ENCODE measurements at regions of chr5 and their contacts with region 1.

Region 1: DNA sequence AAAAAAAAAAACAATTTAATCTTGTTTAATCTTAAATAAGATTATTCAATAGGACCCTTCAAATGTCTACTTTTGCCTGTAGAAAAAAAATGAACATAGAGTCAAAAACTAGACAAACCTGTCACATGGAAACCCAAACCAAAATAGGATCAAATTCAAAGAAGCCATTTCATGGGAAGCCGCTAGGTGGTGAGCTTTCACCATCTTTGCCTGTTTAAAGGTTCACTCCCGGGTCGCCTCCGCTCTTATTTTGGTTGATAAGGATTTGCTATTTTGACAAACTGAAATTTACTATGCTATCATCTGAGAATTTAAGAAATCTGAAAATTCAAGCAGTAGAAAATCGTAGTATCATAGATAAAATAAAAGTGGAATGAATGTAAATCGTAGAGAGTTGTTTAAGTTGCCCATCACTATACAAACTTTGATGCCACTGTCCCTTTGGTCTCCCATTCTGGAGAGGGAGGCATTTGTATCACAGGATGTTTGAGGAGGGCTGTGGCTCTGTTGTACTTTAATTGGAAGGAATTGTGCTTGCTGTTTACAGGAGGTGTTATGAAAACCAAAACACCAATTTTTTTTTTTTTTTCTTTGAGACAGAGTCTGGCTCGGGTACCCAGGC is 43.5 kb upstream of the DNAH5 start:
- DNase-seq: peak; percentile 69 to 87
- H3K4me3 ChIP-seq: no peak overlapping the region
- H3K27ac ChIP-seq: peak overlapping the region; percentile 25; the same call in 1 of the 2 replicates
- H3K4me1 ChIP-seq: peaks cover 30% of the 10 kb centered on the region
- H3K27me3 ChIP-seq: no peaks in the 10 kb centered on the region
- CTCF ChIP-seq: peak; percentile 97

Region 2: DNA sequence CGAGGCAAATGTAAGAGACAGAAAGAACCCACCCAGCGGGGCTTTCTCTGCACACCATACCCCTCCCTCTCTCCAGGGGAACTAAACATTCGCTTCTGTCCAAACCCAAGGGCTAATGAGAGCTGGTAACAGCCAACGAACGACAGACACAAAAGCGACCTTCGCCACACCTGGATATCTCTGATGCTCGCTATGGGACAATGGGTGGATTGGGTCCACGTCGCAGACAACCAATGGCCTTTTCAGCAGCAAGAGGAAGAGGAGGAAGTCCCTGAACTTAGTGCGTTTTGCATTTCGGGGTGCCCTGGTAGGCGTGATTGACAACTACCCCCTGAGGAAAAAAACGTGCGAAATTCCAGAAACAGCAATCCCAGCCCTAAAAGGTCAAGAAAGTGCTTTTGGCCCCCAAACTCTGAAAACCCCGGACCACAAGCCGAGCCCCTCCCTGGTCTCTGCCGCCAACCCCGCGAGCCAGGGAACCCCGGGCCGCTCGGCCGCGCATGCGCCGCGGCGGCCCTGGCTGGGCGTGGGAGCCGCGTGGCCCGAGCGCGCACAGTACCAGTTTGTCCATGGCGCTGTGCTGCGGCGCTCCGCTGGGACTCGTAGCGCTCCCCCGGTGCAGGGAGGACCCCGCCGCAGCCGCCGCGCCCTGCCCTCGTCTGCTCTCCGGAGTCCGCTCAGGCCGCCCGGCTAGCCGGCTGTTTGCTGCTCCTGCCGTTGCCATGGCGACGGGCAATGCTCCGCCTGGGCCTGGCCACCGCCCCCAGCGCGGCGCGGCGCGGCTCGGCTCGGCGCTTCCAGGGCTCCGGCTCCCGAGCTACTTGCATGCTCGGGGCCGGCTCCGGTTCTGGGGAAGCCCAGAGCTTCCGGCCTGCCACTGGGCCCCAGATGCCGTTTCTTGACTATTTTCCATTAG is 23.4 kb after region 1 on chr5:
- CTCF ChIA-PET with region 1: no interaction called
- POLR2A ChIA-PET with region 1: interaction called, 4 read pairs
- intact Hi-C with region 1: loop called (anchors 1 kb)
- DNase-seq: peak; percentile 87 to 100
- H3K4me3 ChIP-seq: peak overlapping the region; percentile 63
- H3K27ac ChIP-seq: peak overlapping the region; percentile 75
- H3K4me1 ChIP-seq: peaks cover 40% of the 10 kb centered on the region
- H3K27me3 ChIP-seq: no peaks in the 10 kb centered on the region
- CTCF ChIP-seq: no peak

Region 3: DNA sequence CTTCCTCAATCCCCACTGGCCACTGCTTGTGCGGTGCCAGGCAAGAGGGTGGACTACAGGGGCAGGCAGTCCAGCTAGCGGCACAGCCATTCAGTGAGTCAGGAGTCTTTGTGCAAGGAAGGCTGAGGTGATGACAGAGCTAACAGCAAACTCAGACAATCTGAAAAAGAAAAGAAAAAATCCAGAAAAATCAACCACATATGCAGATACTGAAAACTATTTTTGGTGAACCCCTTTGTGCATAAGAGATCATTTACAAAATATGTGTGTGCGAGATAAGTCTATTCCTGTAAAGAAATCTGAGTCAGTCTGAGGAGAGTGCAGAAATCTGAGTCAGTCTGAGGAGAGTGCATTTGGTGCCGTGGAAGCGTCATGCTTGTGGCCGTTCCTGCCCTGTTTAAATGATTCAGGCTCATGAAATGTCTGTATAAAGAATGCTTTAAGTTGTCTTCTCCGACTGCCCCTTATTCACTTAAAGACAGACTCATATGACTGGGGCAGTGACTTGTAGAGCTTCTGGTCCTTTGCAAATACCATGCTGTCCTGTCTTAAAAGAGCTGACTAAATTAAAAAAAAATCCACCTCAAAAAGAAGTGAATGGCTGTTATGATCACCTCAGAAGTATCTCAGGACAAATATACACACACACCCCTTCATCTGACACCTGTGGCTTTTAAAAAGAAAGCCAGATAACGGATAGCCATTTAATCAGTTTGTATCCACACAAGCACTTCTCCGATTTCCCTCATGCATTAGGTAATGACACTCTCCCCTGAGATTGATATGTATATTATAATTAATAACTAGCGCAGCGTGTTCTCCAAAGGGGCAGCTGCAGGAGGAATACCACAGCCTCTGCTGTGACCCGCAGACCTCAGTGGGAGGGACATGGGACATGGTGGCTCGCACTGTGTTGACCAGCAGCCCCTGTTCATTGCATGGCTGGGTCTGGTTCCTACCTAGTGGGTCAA is 202.5 kb after region 1 on chr5:
- CTCF ChIA-PET with region 1: no interaction called
- POLR2A ChIA-PET with region 1: no interaction called
- intact Hi-C with region 1: loop called (anchors 1 kb)
- DNase-seq: peak; percentile 87 to 98
- H3K4me3 ChIP-seq: peak overlapping the region; percentile 30; the same call in 1 of the 2 replicates
- H3K27ac ChIP-seq: peak overlapping the region; percentile 92
- H3K4me1 ChIP-seq: peaks cover 79% of the 10 kb centered on the region
- H3K27me3 ChIP-seq: no peaks in the 10 kb centered on the region
- CTCF ChIP-seq: no peak

Region 4: DNA sequence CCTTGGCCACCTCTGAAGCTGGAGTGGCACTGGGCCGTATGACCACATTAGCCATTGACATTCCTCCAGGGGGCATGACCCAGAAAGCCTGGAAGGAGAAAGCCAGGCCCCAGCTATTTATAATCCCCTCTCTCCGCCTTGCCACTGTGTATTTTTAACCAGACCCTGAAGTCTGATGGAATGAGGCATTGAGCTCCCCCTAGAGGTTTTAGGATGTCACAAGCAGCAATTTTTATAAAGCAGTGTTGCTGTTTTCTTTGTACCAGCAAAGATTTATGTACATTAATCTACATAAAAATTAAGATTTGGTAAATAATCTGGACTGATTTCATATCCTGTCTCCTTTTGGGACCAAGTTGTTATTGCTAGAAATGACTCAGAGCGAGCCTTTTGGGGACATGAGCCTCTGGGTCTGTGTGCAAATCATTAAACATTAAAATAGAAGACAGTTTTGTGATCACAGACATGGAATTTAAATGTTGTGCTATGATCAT is 282.3 kb after region 1 on chr5:
- CTCF ChIA-PET with region 1: interaction called, 7 read pairs
- POLR2A ChIA-PET with region 1: interaction called, 9 read pairs
- intact Hi-C with region 1: loop called (anchors 1 kb)
- DNase-seq: peak; percentile 81 to 86
- H3K4me3 ChIP-seq: 0 out of 2 replicates have a peak overlapping the region, but pooled peaks have one; percentile 8
- H3K27ac ChIP-seq: peak overlapping the region; percentile 88
- H3K4me1 ChIP-seq: peaks cover 57% of the 10 kb centered on the region
- H3K27me3 ChIP-seq: no peaks in the 10 kb centered on the region
- CTCF ChIP-seq: peak; percentile 90

Region 5: GRCh38 chr5:14405267-14405666 is 417.3 kb after region 1 on chr5:
- CTCF ChIA-PET with region 1: interaction called, 3 read pairs
- POLR2A ChIA-PET with region 1: no interaction called
- intact Hi-C with region 1: loop called (anchors 2 kb)
- DNase-seq: peak in 1 of 2 experiments; percentile 73
- H3K4me3 ChIP-seq: no peak overlapping the region
- H3K27ac ChIP-seq: no peak overlapping the region
- H3K4me1 ChIP-seq: no peaks in the 10 kb centered on the region
- H3K27me3 ChIP-seq: no peaks in the 10 kb centered on the region
- CTCF ChIP-seq: 0 out of 2 replicates have a peak, but pooled peaks have one; percentile 34

Measured in PC-9 (cell line).